ENCODE measurements at regions of chr9 and their contacts with region 1.

Region 1: GRCh38 chr9:33942471-33943083 is 106.1 kb downstream of the UBAP2 start:
- DNase-seq: peak; percentile 71
- H3K4me3 ChIP-seq: no peak overlapping the region
- H3K27ac ChIP-seq: peak overlapping the region; percentile 56
- H3K4me1 ChIP-seq: peaks cover 19% of the 10 kb centered on the region
- H3K27me3 ChIP-seq: no peaks in the 10 kb centered on the region
- CTCF ChIP-seq: peak in 1 of 2 donors; percentile 14
- POLR2A ChIP-seq: no peak

Region 2: DNA sequence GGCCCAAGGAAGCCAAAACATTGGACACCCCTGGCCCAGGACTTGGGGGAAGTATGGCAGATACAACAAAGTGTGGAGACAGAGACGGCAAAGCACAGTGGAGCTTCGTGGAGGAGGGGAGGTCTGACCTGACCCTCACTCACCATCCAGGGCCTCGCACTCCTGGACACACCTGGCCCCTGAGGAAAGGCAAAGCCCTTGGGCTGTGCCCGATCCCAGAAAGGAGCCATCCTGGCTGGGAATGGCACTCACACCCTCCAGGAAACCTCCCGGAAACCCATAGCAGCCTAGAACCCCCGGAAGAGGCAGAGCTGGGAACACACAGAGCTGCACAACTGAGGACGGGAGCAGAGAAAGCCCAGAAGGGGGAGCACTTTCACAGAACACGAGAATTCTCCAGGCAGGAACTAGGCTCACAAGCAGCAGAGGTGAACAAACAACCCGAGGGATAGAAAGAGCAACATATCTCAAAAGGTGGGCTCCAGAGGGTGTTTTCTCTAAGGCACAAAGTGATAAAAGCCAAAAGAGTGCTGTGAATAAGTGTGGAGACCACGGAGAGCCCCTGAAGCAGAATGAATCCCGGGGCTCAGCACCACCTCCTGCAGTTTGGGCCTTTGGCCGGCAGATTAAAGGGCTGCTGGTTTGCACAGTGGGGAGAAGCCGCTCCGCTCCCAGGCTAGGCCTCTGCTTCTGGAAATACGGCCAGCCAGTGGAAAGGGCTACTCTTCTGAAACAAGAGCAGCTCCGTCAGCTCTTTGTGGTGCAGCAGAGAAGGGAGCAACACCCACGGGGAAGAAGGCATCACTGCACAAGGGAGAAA is 17.4 kb before region 1 on chr9:
- CTCF ChIA-PET with region 1: interaction called, 11 read pairs
- POLR2A ChIA-PET with region 1: no interaction called
- dilution Hi-C with region 1: no loop called
- intact Hi-C with region 1: no loop called
- DNase-seq: peak; percentile 61
- H3K4me3 ChIP-seq: no peak overlapping the region
- H3K27ac ChIP-seq: no peak overlapping the region
- H3K4me1 ChIP-seq: no peaks in the 10 kb centered on the region
- H3K27me3 ChIP-seq: no peaks in the 10 kb centered on the region
- CTCF ChIP-seq: peak; percentile 70 to 79
- POLR2A ChIP-seq: no peak

Region 3: GRCh38 chr9:34016149-34016548 is 73.6 kb after region 1 on chr9:
- CTCF ChIA-PET with region 1: no interaction called
- POLR2A ChIA-PET with region 1: no interaction called
- dilution Hi-C with region 1: no loop called
- intact Hi-C with region 1: no loop called
- DNase-seq: no peak
- H3K4me3 ChIP-seq: no peak overlapping the region
- H3K27ac ChIP-seq: no peak overlapping the region
- H3K4me1 ChIP-seq: no peaks in the 10 kb centered on the region
- H3K27me3 ChIP-seq: no peaks in the 10 kb centered on the region
- CTCF ChIP-seq: no peak
- POLR2A ChIP-seq: no peak

Measured in endothelial cell of umbilical vein (primary cell).